AG04449 (cell line): ENCODE measurements at regions of chr7 and their contacts with region 1.

Region 1: DNA sequence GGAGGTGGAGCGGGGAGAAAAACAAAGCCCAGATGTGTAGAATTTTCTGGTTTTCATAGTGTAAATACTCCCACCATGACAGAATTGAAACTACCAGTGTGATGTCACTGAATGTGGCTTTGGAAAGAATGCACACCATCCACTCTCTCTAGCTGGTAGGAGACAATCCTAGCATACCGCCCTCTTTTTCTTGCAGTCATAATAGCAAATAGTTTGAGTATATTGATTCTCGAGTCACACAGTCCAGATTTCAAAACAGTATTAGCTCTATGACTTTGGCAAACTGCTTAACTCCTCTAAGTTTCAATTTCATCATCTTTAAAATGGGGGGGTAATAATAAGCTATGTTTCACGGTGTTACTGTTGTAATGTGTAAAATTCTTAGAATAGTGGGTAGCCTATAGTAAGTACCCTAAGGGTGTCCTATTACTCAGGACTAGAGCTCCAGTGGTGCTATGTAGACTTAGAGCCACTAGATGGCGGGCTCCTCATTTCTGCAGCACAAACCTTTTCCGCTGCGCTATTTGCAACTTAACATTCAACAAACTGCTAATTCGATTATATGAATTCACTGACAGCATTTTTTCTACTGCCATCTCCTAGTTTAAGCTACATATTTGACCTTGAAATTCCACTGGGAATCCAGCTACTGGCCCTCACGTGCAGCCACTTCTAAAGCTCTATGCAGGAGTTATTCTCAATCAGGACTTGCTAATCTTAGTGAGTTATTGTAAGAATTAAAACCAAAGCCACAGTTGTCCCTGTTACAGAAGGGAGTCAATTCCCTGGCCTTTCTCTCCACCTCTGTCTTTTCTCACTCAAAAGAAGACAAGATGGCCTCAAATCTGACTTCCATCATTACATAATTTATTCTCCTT is 18.7 kb downstream of the TAS2R40 start:
- DNase-seq: peak; percentile 60
- H3K4me3 ChIP-seq: peak overlapping the region; percentile 21
- CTCF ChIP-seq: peak; percentile 76

Region 2: GRCh38 chr7:143025371-143025770 is 215.2 kb before region 1 on chr7:
- CTCF ChIA-PET with region 1: no interaction called
- POLR2A ChIA-PET with region 1: no interaction called
- DNase-seq: no peak
- H3K4me3 ChIP-seq: no peak overlapping the region
- CTCF ChIP-seq: no peak

Region 3: DNA sequence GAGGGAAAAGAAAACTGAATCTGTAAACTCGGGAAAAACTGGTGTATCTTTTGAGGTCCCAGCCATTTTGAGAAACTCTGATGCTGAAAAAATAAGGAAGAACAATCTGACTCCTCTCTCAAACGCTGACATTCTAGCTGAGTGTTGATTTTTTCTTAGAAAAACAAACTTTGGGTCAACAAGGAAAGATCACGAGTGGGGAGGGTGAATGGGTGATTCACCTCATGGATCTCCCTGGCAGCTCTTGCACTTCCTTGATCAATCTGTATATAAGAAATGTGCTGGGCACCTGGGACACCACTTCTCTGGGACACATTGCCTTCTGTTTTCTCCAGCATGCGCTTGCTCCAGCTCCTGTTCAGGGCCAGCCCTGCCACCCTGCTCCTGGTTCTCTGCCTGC is 108.7 kb before region 1 on chr7 and contains the start of gene PIP:
- CTCF ChIA-PET with region 1: no interaction called
- POLR2A ChIA-PET with region 1: no interaction called
- DNase-seq: no peak
- H3K4me3 ChIP-seq: no peak within 1 kb of the TSS
- CTCF ChIP-seq: no peak

Region 4: GRCh38 chr7:143214789-143215679 is 25.5 kb before region 1 on chr7:
- CTCF ChIA-PET with region 1: interaction called, 22 read pairs
- POLR2A ChIA-PET with region 1: no interaction called
- DNase-seq: peak; percentile 62
- H3K4me3 ChIP-seq: no peak overlapping the region
- CTCF ChIP-seq: peak; percentile 93

Region 5: DNA sequence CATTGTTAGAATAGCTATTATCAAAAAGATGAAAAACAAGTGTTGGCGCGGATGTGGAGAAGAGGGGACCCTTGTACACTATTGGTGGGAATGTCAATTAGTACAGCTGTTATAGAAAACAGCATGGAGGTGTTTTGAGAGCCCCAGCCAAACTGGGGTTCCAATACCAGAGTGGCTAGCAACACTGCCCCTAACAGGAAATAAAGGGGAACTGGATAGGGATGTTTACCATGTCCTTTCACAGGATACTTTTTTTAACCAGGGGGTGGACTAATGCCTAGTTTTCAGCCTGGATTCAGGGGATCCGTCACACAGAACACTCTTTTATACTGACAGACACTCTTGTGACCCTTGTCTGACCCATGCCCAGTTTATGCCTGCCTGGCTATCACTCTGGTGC is 15.8 kb after region 1 on chr7:
- CTCF ChIA-PET with region 1: interaction called, 51 read pairs
- POLR2A ChIA-PET with region 1: no interaction called
- DNase-seq: no peak
- H3K4me3 ChIP-seq: no peak overlapping the region
- CTCF ChIP-seq: no peak

Region 6: GRCh38 chr7:143299840-143300239 is 59.3 kb after region 1 on chr7:
- CTCF ChIA-PET with region 1: interaction called, 10 read pairs
- POLR2A ChIA-PET with region 1: no interaction called
- DNase-seq: no peak
- H3K4me3 ChIP-seq: no peak overlapping the region
- CTCF ChIP-seq: peak; percentile 37

Region 7: DNA sequence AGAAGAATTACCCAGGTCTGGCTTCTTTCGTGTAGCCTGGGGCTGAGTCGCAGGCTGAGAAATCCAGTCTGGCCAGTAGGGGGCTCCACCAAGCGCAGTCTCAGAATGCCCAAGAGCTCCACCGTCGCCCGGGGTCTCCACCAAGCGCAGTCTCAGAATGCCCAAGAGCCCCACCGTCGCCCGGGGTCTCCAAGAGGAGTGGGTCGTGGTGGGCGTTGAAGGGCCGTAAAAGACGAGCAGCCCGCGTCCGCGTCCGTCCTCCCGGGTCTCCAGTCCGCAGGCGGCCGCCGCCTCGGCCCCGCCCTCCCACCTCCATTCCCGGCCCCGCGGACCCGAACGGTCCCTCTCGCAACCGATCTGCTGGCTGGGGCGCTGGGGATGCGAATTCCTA is 139.7 kb after region 1 on chr7:
- CTCF ChIA-PET with region 1: interaction called, 17 read pairs
- POLR2A ChIA-PET with region 1: interaction called, 5 read pairs
- DNase-seq: no peak
- H3K4me3 ChIP-seq: peak overlapping the region; percentile 91
- CTCF ChIP-seq: peak; percentile 86

Region 8: DNA sequence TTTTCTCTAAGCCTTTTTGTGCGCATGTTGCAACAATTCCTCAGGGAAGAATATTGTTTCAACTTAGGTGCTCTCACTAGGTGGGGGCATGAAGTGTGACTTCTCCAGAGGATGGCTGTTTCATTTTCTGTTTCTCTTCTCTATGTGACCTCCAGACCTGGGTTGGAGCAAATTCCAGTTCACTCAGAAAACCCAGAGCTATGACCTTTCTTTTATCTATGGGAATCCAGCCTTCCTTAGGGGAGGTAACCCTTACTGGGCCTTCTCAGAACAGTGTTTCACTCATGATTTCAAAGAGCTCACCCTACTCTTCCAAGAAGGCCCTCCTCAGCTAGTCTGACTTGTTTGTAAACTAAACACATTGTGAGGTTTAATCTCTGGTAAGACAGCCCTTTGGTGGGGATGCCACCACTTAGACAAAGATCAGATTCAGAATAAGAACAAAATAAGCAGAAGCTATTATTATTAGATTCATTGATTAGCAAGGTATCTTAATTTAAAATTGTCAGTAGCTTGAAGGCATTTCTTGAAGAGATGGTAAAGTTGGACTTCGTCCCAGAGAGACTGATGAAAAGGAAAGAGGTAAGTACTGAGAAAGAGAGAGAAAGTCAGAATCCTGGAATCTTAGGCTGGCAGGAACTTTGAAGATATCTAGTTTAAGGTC is 186.1 kb after region 1 on chr7:
- CTCF ChIA-PET with region 1: interaction called, 10 read pairs
- POLR2A ChIA-PET with region 1: no interaction called
- DNase-seq: no peak
- H3K4me3 ChIP-seq: no peak overlapping the region
- CTCF ChIP-seq: no peak